AG04450 (cell line): ENCODE measurements at regions of chr20 and their contacts with region 1.

Region 1: GRCh38 chr20:20837574-20838021 is 125.2 kb upstream of the RALGAPA2 start:
- DNase-seq: peak; percentile 11
- H3K4me3 ChIP-seq: no peak overlapping the region
- H3K27ac ChIP-seq: no peak overlapping the region
- H3K27me3 ChIP-seq: no peaks in the 10 kb centered on the region
- CTCF ChIP-seq: peak; percentile 67

Region 2: DNA sequence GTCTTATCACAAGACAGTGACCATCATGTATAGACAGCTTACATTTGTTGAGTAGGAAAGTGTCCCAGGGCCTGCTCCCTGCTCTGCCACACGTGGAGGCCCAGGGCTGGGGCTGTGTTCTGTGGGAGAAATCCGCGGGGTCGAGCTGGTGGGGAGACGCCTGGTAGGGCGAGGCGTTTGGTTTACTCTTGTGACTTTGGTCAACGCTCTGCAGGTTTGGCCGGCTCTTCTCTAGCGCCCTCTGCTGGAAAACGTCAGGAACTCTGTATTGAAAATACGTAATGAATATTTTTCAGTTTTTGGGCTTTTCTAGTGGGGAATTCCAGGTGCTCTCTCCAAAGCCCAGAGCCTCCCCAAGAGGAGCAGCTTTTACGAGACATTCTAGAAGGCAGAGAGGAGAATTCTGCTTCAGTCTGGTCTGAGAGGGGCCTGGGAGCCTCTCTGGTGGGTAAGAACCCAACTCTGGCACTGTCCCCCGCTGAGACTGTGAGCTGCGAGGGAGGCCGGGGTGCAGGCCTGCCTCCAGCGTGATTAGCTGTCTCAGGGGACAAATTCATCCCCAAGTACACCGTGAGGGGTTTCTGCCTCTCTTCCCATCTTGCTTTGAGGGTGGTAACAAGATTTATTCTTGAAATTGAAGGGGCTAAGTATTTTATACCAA is 12.5 kb before region 1 on chr20:
- CTCF ChIA-PET with region 1: interaction called, 17 read pairs
- POLR2A ChIA-PET with region 1: no interaction called
- DNase-seq: no peak
- H3K4me3 ChIP-seq: no peak overlapping the region
- H3K27ac ChIP-seq: no peak overlapping the region
- H3K27me3 ChIP-seq: no peaks in the 10 kb centered on the region
- CTCF ChIP-seq: peak; percentile 49

Region 3: DNA sequence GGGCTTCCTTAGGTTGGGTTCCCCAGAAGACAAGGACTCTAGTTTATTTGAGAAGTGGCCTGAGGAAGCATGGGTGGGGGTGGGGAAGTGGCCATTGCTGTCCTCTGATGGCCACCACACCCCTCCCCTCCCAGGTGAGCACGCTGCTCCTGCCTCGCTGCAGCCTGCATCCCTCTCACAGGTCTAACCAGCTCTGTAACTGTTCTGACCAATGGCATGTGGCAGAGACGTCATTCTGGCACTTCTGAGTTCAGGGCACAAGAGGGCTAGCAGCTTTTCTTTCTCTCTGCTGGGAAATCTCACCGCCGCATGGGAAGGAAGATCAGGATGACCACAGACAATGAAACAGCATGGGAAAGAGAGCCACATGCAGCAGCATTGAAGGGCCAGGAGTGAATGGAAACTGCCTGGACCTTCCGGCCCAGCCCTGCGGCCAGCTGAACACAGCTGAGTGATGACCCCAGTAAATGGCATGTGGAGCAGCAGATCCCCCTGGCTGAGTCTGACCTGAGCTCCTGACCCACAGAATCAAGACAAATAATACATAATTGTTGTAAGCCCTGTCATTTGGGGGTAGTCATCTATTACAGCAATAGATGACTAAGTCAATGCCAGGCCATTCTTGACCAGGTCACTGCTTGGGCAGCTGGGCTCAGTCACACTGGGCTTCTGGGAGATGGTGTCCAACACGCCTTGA is 88.8 kb after region 1 on chr20:
- CTCF ChIA-PET with region 1: no interaction called
- POLR2A ChIA-PET with region 1: no interaction called
- DNase-seq: no peak
- H3K4me3 ChIP-seq: no peak overlapping the region
- H3K27ac ChIP-seq: no peak overlapping the region
- H3K27me3 ChIP-seq: no peaks in the 10 kb centered on the region
- CTCF ChIP-seq: no peak

Region 4: GRCh38 chr20:21505161-21505809 is 667.7 kb after region 1 on chr20:
- CTCF ChIA-PET with region 1: interaction called, 36 read pairs
- POLR2A ChIA-PET with region 1: no interaction called
- DNase-seq: no peak
- H3K4me3 ChIP-seq: peak overlapping the region; percentile 48; the same call in 1 of the 2 replicates
- H3K27ac ChIP-seq: no peak overlapping the region
- H3K27me3 ChIP-seq: peaks cover 45% of the 10 kb centered on the region
- CTCF ChIP-seq: peak; percentile 97

Region 5: GRCh38 chr20:21571841-21572690 is 734.5 kb after region 1 on chr20:
- CTCF ChIA-PET with region 1: interaction called, 30 read pairs
- POLR2A ChIA-PET with region 1: no interaction called
- DNase-seq: no peak
- H3K4me3 ChIP-seq: no peak overlapping the region
- H3K27ac ChIP-seq: no peak overlapping the region
- H3K27me3 ChIP-seq: no peaks in the 10 kb centered on the region
- CTCF ChIP-seq: peak; percentile 83

Region 6: GRCh38 chr20:21615617-21616080 is 778.1 kb after region 1 on chr20:
- CTCF ChIA-PET with region 1: interaction called, 16 read pairs
- POLR2A ChIA-PET with region 1: no interaction called
- DNase-seq: no peak
- H3K4me3 ChIP-seq: no peak overlapping the region
- H3K27ac ChIP-seq: no peak overlapping the region
- H3K27me3 ChIP-seq: no peaks in the 10 kb centered on the region
- CTCF ChIP-seq: peak; percentile 61